Posterior cingulate gyrus (tissue), 11 donors: ENCODE measurements at regions of chr10 and their contacts with region 1.

Region 1: DNA sequence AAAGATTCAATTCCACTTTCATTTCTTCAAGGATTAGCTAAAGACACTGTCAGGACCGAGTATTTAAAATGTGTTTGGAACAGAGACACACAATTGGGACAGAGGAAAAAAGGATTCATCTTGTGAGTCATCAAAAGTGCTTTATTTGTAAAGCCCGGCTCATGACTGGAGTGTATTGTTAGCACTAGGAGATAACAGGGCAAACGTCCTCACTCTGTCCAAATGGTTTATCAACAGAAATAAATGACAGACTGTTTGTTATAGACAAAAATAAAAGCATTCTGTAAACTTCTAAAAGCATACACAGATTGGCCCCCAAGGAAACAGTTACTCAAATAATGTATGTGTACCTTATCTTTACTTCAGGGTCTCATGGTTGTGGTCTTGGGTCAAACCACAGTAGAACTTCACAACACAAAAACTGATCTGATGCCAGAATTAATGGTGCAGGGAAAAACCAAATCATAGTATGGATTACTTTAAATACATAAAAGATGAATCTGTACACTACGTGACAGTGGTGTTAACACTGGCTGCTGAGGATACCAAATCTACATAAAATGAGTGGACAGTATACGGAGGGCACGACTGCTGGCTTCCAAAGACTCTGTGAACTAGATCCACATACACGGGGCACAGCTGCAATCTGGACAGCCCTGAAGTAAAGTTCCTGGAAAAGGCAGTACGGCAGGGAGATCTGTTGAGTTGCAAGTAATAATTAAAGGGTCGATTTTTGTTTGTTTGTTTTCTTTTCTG is 179.4 kb downstream of the PIP4K2A start:
- DNase-seq: no peak

Region 2: DNA sequence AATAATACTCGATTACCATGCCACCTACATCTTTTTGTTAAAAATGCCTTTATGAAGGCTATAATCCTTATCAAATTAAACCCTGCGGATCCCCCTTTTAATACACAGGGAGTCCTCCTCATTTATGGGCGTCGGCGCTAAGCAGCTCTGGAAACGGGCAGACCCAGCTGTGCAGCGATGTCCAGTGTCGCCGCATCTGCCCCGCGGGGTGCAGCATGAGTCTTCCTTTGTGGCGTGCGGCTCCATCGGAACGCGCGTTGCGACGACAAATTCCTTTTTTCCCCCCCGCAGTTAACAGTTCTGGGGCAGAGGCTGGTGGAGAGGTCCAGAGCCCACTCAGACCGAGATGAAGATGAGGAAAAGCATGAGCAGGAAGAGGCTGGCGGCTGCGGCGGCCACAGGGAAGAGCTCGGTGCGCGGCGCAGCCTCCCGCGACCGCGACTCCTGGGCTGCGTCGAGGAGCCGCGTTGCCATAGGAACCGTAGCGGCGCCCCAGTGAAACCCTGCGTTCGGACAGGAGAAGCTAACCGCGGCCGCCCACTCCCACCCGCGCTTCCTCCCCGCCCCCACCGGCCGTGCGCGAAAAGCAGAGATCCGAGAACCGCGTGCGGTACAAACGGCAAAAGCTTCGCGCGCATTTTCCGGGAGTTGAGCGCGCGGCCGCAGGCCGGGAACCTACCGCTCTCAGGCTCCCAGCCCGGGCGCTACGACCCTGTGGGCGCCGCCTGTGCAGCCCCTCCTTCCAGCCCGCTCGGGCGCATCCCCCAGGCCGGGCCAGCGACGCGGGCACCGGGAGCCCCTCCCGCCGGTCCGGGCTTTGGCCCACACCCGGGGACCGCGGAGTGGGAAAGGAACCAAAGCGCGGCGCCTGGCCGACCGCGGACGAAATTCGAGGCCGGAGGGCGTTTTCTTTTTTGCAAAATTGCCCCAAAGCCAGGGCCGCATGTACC is 59.1 kb before region 1 on chr10:
- intact Hi-C with region 1: loop called (anchors 10 kb)
- DNase-seq: peak; percentile 25 to 94 (median 52)